Caco-2 (cell line): ENCODE measurements at regions of chr6 and their contacts with region 1.

Region 1: DNA sequence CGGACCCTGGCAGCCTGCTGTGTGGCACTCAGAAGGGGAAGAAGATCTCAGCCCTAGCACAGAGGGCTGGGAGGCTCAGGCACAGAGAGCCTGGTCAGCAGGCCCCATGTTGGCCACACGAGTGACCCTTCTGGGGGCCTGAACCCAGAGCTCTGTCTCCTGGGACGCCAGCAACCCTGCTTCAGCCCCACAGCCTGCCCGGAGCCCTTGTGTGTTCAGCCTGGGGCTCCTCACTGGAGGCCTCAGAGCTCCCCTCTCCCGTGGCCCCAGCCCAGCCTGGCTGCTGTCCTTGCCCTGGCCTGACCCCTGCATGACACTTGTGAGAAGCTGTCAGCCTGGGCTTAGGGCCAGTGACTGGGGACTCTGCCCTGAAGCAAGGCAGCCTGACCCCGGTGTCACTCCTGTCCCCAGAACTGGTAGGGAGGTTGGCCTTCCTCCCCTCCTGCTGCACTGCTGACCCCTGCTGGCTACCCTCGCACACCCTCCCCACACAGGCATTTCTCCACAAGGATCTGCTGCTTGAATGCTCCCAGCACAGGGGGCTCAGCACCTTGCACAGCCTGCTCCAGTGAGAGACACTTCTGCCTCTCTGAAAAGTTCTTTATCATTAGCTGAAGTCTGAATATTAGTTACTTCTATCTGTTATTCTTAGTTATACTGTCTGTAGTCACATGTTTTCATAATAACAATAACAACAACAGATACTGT is 15.4 kb upstream of the IP6K3 start:
- DNase-seq: peak; percentile 90 to 92
- H3K4me3 ChIP-seq: no peak overlapping the region
- H3K4me3 Mint-ChIP-seq: no peak overlapping the region
- H3K27ac Mint-ChIP-seq: no peak overlapping the region
- H3K4me1 ChIP-seq: peaks cover 7% of the 10 kb centered on the region; the same call in 1 of the 2 replicates
- H3K4me1 Mint-ChIP-seq: peaks cover 10% of the 10 kb centered on the region
- H3K27me3 ChIP-seq: no peaks in the 10 kb centered on the region
- H3K27me3 Mint-ChIP-seq: no peaks in the 10 kb centered on the region
- CTCF ChIP-seq: peak; percentile 80 to 92

Region 2: GRCh38 chr6:33744001-33744848 is 17.9 kb before region 1 on chr6:
- CTCF ChIA-PET with region 1: interaction called, 34 read pairs
- POLR2A ChIA-PET with region 1: no interaction called
- intact Hi-C with region 1: loop called (anchors 1 kb)
- DNase-seq: peak; percentile 76 to 80
- H3K4me3 ChIP-seq: no peak overlapping the region
- H3K4me3 Mint-ChIP-seq: peak overlapping the region; percentile 39
- H3K27ac Mint-ChIP-seq: no peak overlapping the region
- H3K4me1 ChIP-seq: peaks cover 12% of the 10 kb centered on the region
- H3K4me1 Mint-ChIP-seq: peaks cover 10% of the 10 kb centered on the region
- H3K27me3 ChIP-seq: no peaks in the 10 kb centered on the region
- H3K27me3 Mint-ChIP-seq: peaks cover 3% of the 10 kb centered on the region
- CTCF ChIP-seq: peak; percentile 86 to 89

Region 3: GRCh38 chr6:33751771-33752645 is 10.1 kb before region 1 on chr6:
- CTCF ChIA-PET with region 1: interaction called, 28 read pairs
- POLR2A ChIA-PET with region 1: no interaction called
- intact Hi-C with region 1: loop called (anchors 1 kb)
- DNase-seq: peak; percentile 77 to 89
- H3K4me3 ChIP-seq: no peak overlapping the region
- H3K4me3 Mint-ChIP-seq: no peak overlapping the region
- H3K27ac Mint-ChIP-seq: no peak overlapping the region
- H3K4me1 ChIP-seq: peaks cover 30% of the 10 kb centered on the region
- H3K4me1 Mint-ChIP-seq: peaks cover 33% of the 10 kb centered on the region
- H3K27me3 ChIP-seq: no peaks in the 10 kb centered on the region
- H3K27me3 Mint-ChIP-seq: peaks cover 3% of the 10 kb centered on the region
- CTCF ChIP-seq: peak in 1 of 2 experiments; percentile 28